ENCODE measurements at regions of chr21 and their contacts with region 1.

Region 1: GRCh38 chr21:41068967-41069642 is 98.9 kb upstream of the BACE2 start:
- DNase-seq: peak; percentile 22
- ATAC-seq: peak; percentile 96
- H3K4me3 ChIP-seq: peak overlapping the region; percentile 11 to 39; a peak in 2 of 4 replicates
- H3K27ac ChIP-seq: no peak overlapping the region
- H3K4me1 ChIP-seq: no peaks in the 10 kb centered on the region
- H3K27me3 ChIP-seq: peaks cover 3% of the 10 kb centered on the region; the same call in 1 of the 2 replicates
- CTCF ChIP-seq: peak; percentile 92

Region 2: DNA sequence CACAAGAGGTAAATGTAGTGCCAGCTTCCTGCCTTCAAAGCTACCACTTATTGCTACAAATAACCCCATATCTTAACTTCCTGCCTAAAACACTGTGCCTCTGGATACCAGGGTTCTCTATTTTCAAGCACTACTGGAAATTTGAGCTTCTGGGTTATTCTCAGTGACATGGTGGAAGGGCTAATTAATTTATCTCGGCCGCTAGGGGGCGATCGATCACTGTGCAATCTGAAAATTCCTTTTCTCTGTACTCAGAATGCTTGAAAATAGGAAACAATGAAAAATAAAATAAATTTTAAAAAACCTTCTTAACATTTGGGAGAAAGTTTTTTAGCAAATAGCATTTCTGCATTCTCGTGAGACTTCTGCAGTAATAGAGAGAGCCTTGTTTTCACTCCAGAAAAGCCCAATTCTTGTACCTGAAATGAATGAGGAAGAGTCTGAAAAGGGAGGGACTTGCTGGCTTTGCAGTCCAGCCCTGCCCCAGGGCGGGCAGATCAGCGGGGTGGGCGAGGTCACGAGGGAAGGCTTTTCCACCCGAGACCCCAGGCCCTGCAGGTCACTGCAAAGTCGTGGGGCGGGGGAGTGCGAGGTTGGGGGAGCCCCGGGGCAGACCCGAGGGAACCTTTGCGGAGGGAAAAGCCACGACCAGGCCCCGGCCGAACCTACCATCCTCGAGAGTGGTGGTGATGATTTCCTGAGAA is 925.1 kb before region 1 on chr21:
- CTCF ChIA-PET with region 1: interaction called, 3 read pairs
- POLR2A ChIA-PET with region 1: no interaction called
- in situ Hi-C with region 1: no loop called
- intact Hi-C with region 1: loop called (anchors 5 kb)
- DNase-seq: peak; percentile 8
- ATAC-seq: peak; percentile 73
- H3K4me3 ChIP-seq: no peak overlapping the region
- H3K27ac ChIP-seq: no peak overlapping the region
- H3K4me1 ChIP-seq: no peaks in the 10 kb centered on the region; the same call in 1 of the 2 replicates
- H3K27me3 ChIP-seq: no peaks in the 10 kb centered on the region
- CTCF ChIP-seq: peak; percentile 78

Region 3: DNA sequence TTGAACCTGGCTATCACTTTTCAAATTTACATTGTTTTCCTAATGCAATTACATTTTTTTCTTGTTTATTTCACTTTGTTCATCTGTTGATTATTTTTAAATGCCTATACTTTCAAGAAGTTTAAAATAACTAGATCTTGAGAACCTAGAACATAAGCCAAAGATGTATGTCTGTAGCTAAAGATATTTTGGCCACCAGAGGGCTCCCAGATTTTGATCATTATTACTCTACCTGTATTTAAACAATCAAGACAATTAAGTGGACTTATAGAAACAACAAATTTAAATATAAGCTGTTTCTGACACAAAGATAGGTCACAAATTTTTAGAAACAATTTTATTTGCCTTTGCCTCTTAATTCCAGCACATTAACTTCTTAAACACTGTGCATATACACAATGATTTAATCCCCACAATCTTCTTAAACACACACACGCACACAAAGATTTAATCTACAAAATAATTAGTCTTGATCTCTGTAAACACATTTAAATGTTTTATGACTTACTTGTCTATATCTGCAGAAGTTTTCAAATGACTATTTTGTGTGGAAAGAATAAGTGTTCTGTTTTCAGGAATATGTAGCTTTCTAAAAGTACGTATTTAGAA is 602.1 kb before region 1 on chr21:
- CTCF ChIA-PET with region 1: no interaction called
- POLR2A ChIA-PET with region 1: no interaction called
- in situ Hi-C with region 1: no loop called
- intact Hi-C with region 1: loop called (anchors 5 kb)
- DNase-seq: peak; percentile 32
- ATAC-seq: no peak
- H3K4me3 ChIP-seq: no peak overlapping the region
- H3K27ac ChIP-seq: no peak overlapping the region
- H3K4me1 ChIP-seq: no peaks in the 10 kb centered on the region
- H3K27me3 ChIP-seq: no peaks in the 10 kb centered on the region
- CTCF ChIP-seq: peak; percentile 45; the same call in 1 of the 2 replicates

Region 4: DNA sequence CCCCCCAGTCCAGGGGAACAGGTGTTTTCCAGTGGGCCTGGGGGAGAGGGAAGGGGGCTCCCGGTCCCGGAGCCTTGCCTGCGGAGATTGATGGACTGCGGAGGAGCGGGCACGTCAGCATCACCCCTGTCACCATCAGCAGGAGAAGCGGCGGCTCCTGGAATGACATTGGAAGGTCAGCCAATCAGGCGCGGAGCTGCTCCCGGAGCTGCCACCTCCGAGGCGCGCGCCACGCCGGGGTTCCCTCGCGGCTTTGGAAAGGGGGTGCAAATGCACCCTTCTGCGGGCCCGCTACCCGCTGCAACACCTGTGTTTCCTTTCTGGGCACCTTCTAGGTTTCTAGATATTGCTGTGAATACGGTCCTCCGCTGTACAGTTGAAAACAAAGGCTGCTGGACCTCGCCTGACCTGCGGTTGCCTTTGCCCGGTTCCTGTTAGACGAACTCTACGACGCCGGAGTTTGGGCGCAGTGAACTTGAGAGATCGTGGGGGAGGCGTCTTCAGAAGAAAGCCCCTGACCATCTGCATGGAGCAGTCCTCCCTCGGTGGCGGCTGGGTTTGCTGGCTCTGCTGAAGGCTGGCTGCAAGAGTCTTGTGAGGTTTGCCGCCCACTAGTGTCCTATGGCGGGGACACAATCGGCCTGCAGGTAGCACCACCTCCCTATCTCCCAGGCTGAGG is 227.4 kb before region 1 on chr21:
- CTCF ChIA-PET with region 1: no interaction called
- POLR2A ChIA-PET with region 1: no interaction called
- in situ Hi-C with region 1: no loop called
- intact Hi-C with region 1: loop called (anchors 10 kb)
- DNase-seq: no peak
- ATAC-seq: peak; percentile 96
- H3K4me3 ChIP-seq: peak overlapping the region; percentile 24 to 43
- H3K27ac ChIP-seq: no peak overlapping the region
- H3K4me1 ChIP-seq: no peaks in the 10 kb centered on the region
- H3K27me3 ChIP-seq: peaks cover 23% of the 10 kb centered on the region
- CTCF ChIP-seq: peak; percentile 76

Region 5: DNA sequence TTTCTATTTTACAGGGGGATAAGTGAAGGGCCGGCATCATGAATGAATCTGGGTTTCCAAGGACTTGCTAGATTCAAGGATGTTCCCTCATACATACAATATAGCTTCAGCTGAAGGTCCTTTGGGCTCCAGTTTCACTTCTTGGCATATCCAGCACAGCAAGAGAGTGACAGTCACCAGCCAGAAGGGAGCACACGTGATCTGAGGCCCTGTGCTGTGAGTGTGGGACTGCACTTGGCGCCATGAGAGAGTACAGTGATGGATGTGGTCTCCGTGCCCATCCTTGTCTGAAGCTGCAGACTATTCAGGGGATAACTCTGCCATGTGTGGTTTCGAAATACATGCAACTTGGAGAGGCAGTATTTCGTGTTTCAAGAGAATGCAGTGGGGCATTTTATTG is 62.5 kb before region 1 on chr21:
- CTCF ChIA-PET with region 1: no interaction called
- POLR2A ChIA-PET with region 1: no interaction called
- in situ Hi-C with region 1: no loop called
- intact Hi-C with region 1: no loop called
- DNase-seq: no peak
- ATAC-seq: no peak
- H3K4me3 ChIP-seq: no peak overlapping the region
- H3K27ac ChIP-seq: no peak overlapping the region
- H3K4me1 ChIP-seq: no peaks in the 10 kb centered on the region
- H3K27me3 ChIP-seq: no peaks in the 10 kb centered on the region
- CTCF ChIP-seq: no peak

Region 6: DNA sequence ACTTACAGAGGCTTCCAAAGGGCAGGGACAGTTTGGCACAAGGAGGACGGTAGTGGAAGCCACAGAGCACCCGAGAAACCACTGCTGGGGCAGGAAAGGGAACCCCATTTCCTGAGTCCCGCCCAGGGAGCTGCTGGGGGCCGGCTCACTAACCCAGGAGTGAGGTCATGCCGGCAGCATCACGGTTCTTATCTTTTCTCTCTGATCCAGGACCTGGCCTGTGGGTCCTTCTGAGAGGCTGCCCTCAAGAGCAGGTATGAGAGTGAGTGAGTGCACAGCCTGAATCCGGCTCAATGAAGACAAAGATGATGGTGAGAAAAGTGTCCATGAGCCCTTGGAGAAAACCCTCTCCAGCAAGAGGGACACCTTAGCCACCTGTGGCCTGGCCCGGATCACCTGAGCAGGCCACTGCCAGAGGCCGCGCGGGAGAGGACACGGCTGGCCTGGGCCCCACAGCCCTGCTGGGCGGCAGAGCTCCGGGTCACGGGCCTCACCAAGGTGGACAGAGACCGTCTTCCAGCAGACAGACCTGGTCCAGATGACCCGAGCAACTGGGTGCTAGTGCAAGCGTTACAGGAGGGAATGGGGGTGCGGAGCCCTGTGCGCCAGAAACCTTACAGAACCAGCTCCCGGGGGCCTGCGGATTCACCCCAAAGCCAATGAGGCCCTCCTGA is 602.9 kb after region 1 on chr21:
- CTCF ChIA-PET with region 1: no interaction called
- POLR2A ChIA-PET with region 1: no interaction called
- in situ Hi-C with region 1: no loop called
- intact Hi-C with region 1: no loop called
- DNase-seq: no peak
- ATAC-seq: peak; percentile 71
- H3K4me3 ChIP-seq: no peak overlapping the region
- H3K27ac ChIP-seq: peak overlapping the region; percentile 72
- H3K4me1 ChIP-seq: peaks cover 51% of the 10 kb centered on the region
- H3K27me3 ChIP-seq: no peaks in the 10 kb centered on the region
- CTCF ChIP-seq: no peak